GM18951 (cell line): ENCODE measurements at regions of chr19 and their contacts with region 1.

Region 1: GRCh38 chr19:44993926-44994537 is 7.2 kb upstream of the RELB start:
- POLR2A ChIP-seq: no peak

Region 2: GRCh38 chr19:45059278-45059965 is 65.4 kb after region 1 on chr19:
- in situ Hi-C with region 1: loop called (anchors 5 kb)
- POLR2A ChIP-seq: no peak

Region 3: DNA sequence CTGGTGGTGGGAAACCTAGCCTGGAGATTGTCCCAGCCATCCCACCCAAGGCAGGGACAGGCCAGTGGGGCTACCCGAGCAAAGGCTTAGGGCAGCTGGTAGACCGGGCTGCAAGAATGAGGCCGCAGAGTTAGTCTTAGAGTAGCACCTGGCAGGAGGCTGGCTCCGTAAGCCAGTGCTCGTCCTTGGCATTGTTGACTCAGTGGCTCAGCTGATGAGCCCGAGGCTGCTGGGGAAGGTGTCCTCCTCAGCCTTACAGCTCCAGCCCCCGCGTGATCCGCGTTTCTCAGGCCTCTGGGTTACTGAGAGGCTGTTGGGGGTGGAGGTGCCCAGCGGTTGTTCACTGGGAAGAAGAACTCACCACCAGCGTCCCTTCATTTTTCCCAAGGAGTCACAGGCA is 123.6 kb after region 1 on chr19:
- in situ Hi-C with region 1: no loop called
- POLR2A ChIP-seq: no peak